ENCODE measurements at regions of chr1 and their contacts with region 1.

Region 1: DNA sequence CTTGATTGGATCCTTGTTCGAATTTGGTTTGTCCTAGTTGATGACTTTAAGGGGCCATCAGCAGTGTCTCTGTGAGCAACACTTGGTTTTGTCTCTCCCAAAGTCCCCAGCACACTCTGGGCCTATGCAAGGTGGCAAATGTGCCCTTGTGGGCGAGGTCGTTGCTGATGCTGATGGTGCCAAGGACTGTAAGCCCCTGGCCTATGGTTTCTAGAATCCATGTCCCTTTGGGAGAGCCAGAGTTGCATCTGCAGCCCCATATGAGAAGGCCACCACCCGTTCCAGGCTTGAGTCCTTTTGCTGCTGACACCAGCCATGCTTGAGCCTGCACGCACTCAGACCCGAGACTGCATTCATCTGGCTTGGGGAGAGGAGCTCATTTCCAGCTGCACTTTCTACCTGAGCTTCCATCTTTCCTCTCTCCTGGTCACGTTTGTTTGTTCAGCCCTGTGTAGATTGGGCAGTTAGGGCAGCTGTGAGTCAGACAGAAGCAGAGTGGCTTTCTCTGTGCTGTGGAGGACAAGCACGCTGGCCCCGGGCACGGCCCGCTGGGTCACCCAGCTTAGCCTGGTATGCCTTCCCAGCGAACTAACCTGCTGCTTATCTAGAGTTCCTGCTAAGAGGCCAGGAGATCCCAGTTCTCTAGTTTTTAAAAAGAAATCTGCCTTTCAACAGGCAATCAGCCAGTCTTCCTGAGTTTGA is 52.1 kb upstream of the CSF3R start:
- DNase-seq: no peak
- H3K4me3 ChIP-seq: no peak overlapping the region
- H3K27ac ChIP-seq: no peak overlapping the region
- H3K4me1 ChIP-seq: no peaks in the 10 kb centered on the region
- H3K27me3 ChIP-seq: no peaks in the 10 kb centered on the region
- CTCF ChIP-seq: no peak
- POLR2A ChIP-seq: no peak

Region 2: GRCh38 chr1:36359911-36360550 is 174.8 kb before region 1 on chr1:
- intact Hi-C with region 1: loop called (anchors 5 kb)
- DNase-seq: peak in 1 of 2 donors; percentile 38
- H3K4me3 ChIP-seq: no peak overlapping the region
- H3K27ac ChIP-seq: peak overlapping the region; percentile 36 to 43
- H3K4me1 ChIP-seq: no peaks in the 10 kb centered on the region
- H3K27me3 ChIP-seq: no peaks in the 10 kb centered on the region
- CTCF ChIP-seq: no peak
- POLR2A ChIP-seq: no peak

Region 3: DNA sequence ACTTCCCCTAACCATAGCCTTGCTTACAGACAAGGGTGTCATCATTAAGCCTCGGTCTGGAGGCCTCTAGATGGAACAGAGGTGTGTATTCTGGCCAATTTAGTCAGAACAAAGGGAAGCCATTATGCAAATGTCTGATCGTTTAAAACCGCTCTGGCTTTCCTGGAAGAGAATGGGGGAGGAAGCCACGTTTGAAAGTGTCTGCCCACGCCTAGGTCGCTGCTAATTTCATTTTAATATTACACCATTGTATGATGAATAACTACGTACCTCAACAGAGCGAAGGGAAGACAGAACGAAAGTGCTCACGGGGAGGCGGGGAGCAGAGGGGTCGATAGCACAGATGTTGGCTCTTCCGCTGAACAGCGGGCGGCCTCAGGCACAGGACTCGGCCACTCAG is 11.0 kb before region 1 on chr1:
- intact Hi-C with region 1: no loop called
- DNase-seq: no peak
- H3K4me3 ChIP-seq: no peak overlapping the region
- H3K27ac ChIP-seq: no peak overlapping the region
- H3K4me1 ChIP-seq: no peaks in the 10 kb centered on the region
- H3K27me3 ChIP-seq: no peaks in the 10 kb centered on the region
- CTCF ChIP-seq: no peak
- POLR2A ChIP-seq: no peak